ENCODE measurements at regions of chr6 and their contacts with region 1.

Region 1: GRCh38 chr6:17392978-17393891 is at the start of gene CAP2:
- DNase-seq: no peak
- H3K4me3 ChIP-seq: peak within 1 kb of the TSS; percentile 70
- CTCF ChIP-seq: no peak

Region 2: DNA sequence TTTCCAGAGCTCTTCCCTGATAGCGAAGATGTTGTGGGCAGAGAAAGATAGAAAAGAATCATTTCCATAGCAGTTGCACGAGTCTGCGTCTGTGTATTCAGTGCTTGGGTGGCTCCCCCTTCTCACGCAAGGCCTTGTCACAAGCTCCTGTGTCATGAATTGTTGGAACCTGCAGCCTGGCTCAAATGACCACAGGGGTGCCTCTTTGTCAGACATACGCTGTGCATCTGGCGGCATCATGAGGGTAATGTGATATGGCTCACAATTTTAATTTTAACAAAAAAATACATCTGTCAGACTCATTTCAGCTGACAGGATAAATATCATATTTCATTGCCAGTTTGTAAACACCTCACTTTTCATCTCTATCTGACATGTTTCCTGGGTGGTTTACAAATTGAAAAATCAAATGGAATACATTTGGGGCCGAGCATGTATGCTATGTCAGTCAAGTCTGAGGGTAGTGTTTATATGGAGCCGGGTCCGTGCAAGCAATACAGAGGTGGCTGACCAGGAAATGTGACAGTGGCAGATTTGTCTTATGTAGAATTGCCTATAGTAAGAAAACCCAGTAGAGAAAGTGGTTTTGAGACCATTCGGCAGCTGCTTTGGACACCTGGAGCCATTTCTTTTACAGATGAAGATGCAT is 91.1 kb after region 1 on chr6:
- in situ Hi-C with region 1: loop called (anchors 5 kb)
- DNase-seq: no peak
- H3K4me3 ChIP-seq: no peak overlapping the region
- CTCF ChIP-seq: no peak

Region 3: GRCh38 chr6:18187701-18188100 is 794.5 kb after region 1 on chr6:
- in situ Hi-C with region 1: no loop called
- DNase-seq: no peak
- H3K4me3 ChIP-seq: no peak overlapping the region
- CTCF ChIP-seq: no peak

Measured in astrocyte of the cerebellum (primary cell).